CD4-positive, alpha-beta memory T cell (primary cell): ENCODE measurements at regions of chr19 and their contacts with region 1.

Region 1: DNA sequence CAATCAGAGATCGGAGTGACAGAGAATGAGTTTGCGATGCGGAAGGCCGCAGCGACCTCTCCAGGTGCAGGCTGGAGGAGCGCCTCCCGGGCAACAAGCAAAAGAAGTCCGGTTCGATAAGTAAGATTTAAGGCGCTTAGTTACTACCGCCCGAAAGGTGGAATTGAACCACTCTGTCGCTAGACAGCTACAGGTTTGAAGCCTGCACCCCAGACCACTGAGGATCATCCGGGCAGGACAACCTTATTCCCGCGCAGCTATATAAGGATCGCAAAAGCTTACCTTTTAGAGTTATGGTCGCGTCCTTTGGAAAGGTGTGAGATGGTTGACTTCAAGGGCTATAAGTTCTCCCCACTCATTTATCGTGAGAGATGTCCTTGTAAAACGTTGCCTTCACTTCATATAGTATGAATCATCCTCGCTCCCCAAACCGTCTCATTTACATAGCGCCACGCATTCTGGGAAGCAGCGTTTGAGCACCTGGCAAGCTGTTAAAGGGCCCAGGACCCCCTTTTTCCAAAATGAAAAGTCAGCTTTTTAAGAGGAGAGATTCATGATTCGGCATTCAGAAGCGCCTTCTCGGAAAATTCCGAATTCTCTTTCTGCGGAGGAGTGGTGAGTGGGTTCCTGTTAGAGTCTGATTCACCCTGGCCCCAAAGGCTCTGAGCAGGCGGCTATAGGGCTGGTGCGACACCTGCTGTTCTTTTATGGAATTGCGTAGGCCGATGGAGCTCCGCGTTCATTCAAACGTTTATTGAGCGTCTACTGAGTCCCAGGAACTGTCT is 10.8 kb downstream of the FOSB start:
- DNase-seq: peak; percentile 91 to 92 (median 91)
- H3K4me3 ChIP-seq: peak overlapping the region; percentile 51 to 74
- H3K4me3 Mint-ChIP-seq: peak overlapping the region; percentile 62 to 93 (median 84)
- H3K27ac ChIP-seq: peak overlapping the region; percentile 93
- H3K27ac Mint-ChIP-seq: peak overlapping the region; percentile 97 to 99 (median 98)
- H3K4me1 ChIP-seq: peaks cover 14% of the 10 kb centered on the region
- H3K4me1 Mint-ChIP-seq: peaks cover 25 to 46% (median 28%) of the 10 kb centered on the region in 4 donors
- H3K27me3 ChIP-seq: no peaks in the 10 kb centered on the region
- H3K27me3 Mint-ChIP-seq: peaks cover 1% of the 10 kb centered on the region in 2 donors

Region 2: GRCh38 chr19:45423589-45424190 is 55.0 kb before region 1 on chr19 and contains the start of gene ERCC1:
- CTCF ChIA-PET with region 1: interaction called, 66 read pairs
- POLR2A ChIA-PET with region 1: interaction called, 12 read pairs
- intact Hi-C with region 1: loop called (anchors 1 kb)
- DNase-seq: peak in 4 of 5 donors; percentile 67 to 87 (median 71)
- H3K4me3 ChIP-seq: peak within 1 kb of the TSS; percentile 54 to 74
- H3K4me3 Mint-ChIP-seq: peak within 1 kb of the TSS; percentile 91 to 97 (median 94)
- H3K27ac ChIP-seq: peak within 1 kb of the TSS; percentile 68
- H3K27ac Mint-ChIP-seq: peak within 1 kb of the TSS; percentile 89 to 97 (median 94)
- H3K4me1 ChIP-seq: peaks cover 36% of the 10 kb centered on the region
- H3K4me1 Mint-ChIP-seq: peaks cover 28 to 58% (median 41%) of the 10 kb centered on the region in 4 donors
- H3K27me3 ChIP-seq: no peaks in the 10 kb centered on the region
- H3K27me3 Mint-ChIP-seq: peaks cover 0 to 2% of the 10 kb centered on the region in 2 donors
- total RNA-seq, gene ERCC1: 46.6 to 46.9 TPM

Region 3: DNA sequence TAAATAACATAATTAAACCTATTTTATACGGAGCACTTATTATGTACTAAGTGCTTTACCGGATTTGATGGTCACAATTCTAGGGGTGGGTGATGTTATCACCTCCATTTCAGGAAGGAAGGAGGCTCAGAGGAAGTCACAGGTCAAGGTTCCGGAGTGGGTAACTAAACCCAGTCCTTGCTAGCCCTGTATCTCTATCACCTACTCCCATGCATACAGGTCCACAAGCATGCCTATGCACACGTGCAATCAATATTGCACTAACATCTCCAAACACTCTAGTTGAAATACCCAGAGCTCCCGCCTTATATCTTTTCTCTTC is 28.7 kb before region 1 on chr19:
- CTCF ChIA-PET with region 1: interaction called, 72 read pairs
- POLR2A ChIA-PET with region 1: interaction called, 24 read pairs
- intact Hi-C with region 1: loop called (anchors 1 kb)
- DNase-seq: peak in 3 of 5 donors; percentile 61 to 69 (median 64)
- H3K4me3 ChIP-seq: peak overlapping the region; percentile 45 to 50
- H3K4me3 Mint-ChIP-seq: peak overlapping the region; percentile 93 to 97 (median 96)
- H3K27ac ChIP-seq: peak overlapping the region; percentile 99
- H3K27ac Mint-ChIP-seq: peak overlapping the region; percentile 99 to 100 (median 100)
- H3K4me1 ChIP-seq: peaks cover 42% of the 10 kb centered on the region
- H3K4me1 Mint-ChIP-seq: peaks cover 36 to 75% (median 49%) of the 10 kb centered on the region in 4 donors
- H3K27me3 ChIP-seq: no peaks in the 10 kb centered on the region
- H3K27me3 Mint-ChIP-seq: peaks cover 0 to 4% of the 10 kb centered on the region in 2 donors